ENCODE measurements at regions of chr17 and their contacts with region 1.

Region 1: GRCh38 chr17:59668816-59669215 is 38.4 kb downstream of the PTRH2 start:
- DNase-seq: no peak
- ATAC-seq: no peak
- H3K4me3 Mint-ChIP-seq: no peak overlapping the region
- H3K27ac Mint-ChIP-seq: no peak overlapping the region
- H3K4me1 Mint-ChIP-seq: peaks cover 25% of the 10 kb centered on the region
- H3K27me3 Mint-ChIP-seq: no peaks in the 10 kb centered on the region

Region 2: DNA sequence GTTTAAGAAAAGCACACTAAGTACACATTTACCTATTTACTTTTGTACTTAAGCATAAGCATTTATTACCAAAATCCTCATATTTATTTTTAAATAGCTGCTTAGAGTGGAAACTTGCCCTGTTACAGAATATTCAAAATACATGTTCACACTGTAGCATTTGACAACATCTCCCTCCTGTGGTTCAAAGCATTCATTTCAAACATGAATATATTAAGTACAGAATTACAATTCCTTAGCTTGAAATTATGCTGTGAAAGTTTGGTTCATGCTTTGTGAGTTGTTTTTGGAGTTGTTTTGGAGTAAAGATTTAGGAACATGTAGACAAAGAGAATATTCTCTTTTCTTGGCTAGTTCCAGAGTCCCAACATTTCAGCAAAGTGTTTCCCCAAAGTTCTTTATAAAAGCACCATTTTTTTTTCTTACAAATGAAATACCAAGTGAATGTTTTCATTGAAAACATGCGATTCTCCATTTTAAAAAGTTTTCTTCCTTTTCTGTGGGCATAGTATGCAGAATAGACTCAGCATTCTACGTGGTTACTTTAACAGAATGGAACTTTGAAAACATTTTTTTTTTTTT is 190.7 kb after region 1 on chr17:
- CTCF ChIA-PET with region 1: interaction called, 10 read pairs
- POLR2A ChIA-PET with region 1: no interaction called
- DNase-seq: no peak
- ATAC-seq: peak; percentile 63
- H3K4me3 Mint-ChIP-seq: no peak overlapping the region
- H3K27ac Mint-ChIP-seq: no peak overlapping the region
- H3K4me1 Mint-ChIP-seq: peaks cover 16% of the 10 kb centered on the region
- H3K27me3 Mint-ChIP-seq: no peaks in the 10 kb centered on the region